ENCODE measurements at regions of chr10 and their contacts with region 1.

Region 1: GRCh38 chr10:84537447-84537931 is 209.1 kb downstream of the CCSER2 start:
- DNase-seq: peak in 1 of 2 donors; percentile 32
- H3K4me3 ChIP-seq: no peak overlapping the region
- H3K27ac ChIP-seq: no peak overlapping the region
- H3K4me1 ChIP-seq: peaks cover 0 to 13% (median 11%) of the 10 kb centered on the region in 4 donors
- H3K27me3 ChIP-seq: peaks cover 0 to 24% of the 10 kb centered on the region in 2 donors
- CTCF ChIP-seq: peak; percentile 87

Region 2: GRCh38 chr10:84264611-84265141 is 272.8 kb before region 1 on chr10:
- intact Hi-C with region 1: loop called (anchors 2 kb)
- DNase-seq: peak; percentile 73 to 75
- H3K4me3 ChIP-seq: no peak overlapping the region
- H3K27ac ChIP-seq: no peak overlapping the region
- H3K4me1 ChIP-seq: no peaks in the 10 kb centered on the region
- H3K27me3 ChIP-seq: peaks cover 0 to 45% of the 10 kb centered on the region in 2 donors
- CTCF ChIP-seq: peak; percentile 86 to 89

Region 3: DNA sequence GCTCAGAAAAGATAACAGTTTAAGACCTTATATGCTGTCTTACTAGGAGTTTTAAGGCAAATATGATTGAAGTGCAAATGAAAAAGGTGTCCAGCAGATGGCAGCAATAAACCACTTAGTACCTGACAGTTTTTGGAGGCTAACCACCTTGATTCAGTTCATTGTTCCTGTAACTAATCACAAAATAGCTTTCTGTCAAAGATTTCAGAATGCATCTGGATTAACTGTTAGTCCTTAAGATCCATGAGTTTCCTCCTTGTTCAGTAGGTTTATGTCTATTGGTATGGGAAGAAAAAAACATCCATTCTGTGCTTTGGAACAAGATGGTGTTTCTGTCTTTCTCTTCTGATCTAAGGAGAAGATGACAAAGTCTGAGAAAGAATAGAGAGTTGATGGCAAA is 162.5 kb before region 1 on chr10:
- intact Hi-C with region 1: loop called (anchors 2 kb)
- DNase-seq: no peak
- H3K4me3 ChIP-seq: no peak overlapping the region
- H3K27ac ChIP-seq: no peak overlapping the region
- H3K4me1 ChIP-seq: peaks cover 0 to 4% (median 0%) of the 10 kb centered on the region in 4 donors
- H3K27me3 ChIP-seq: no peaks in the 10 kb centered on the region
- CTCF ChIP-seq: peak; percentile 72 to 81

Region 4: GRCh38 chr10:84665883-84666463 is 128.5 kb after region 1 on chr10:
- intact Hi-C with region 1: no loop called
- DNase-seq: no peak
- H3K4me3 ChIP-seq: no peak overlapping the region
- H3K27ac ChIP-seq: no peak overlapping the region
- H3K4me1 ChIP-seq: no peaks in the 10 kb centered on the region
- H3K27me3 ChIP-seq: no peaks in the 10 kb centered on the region
- CTCF ChIP-seq: no peak

Region 5: GRCh38 chr10:86376852-86377796 is 1839.6 kb after region 1 on chr10:
- intact Hi-C with region 1: loop called (anchors 5 kb)
- DNase-seq: peak; percentile 57 to 78
- H3K4me3 ChIP-seq: peak overlapping the region in 1 of 2 donors; percentile 37
- H3K27ac ChIP-seq: no peak overlapping the region
- H3K4me1 ChIP-seq: peaks cover 0 to 5% (median 4%) of the 10 kb centered on the region in 4 donors
- H3K27me3 ChIP-seq: peaks cover 0 to 66% of the 10 kb centered on the region in 2 donors
- CTCF ChIP-seq: peak; percentile 98 to 99

Measured in tibial artery (tissue), 4 donors.